B cell (primary cell): ENCODE measurements at regions of chr5 and their contacts with region 1.

Region 1: GRCh38 chr5:179697993-179698934 is 503 bp upstream of the CANX start:
- DNase-seq: peak; percentile 99
- ATAC-seq: peak; percentile 90
- H3K4me3 ChIP-seq: peak overlapping the region; percentile 65 to 95 (median 90)
- H3K4me3 Mint-ChIP-seq: peak overlapping the region; percentile 99
- H3K27ac ChIP-seq: peak overlapping the region; percentile 92 to 98
- H3K27ac Mint-ChIP-seq: peak overlapping the region; percentile 99
- H3K4me1 ChIP-seq: peaks cover 16 to 27% of the 10 kb centered on the region in 2 donors
- H3K4me1 Mint-ChIP-seq: peaks cover 30% of the 10 kb centered on the region
- H3K27me3 ChIP-seq: no peaks in the 10 kb centered on the region
- H3K27me3 Mint-ChIP-seq: no peaks in the 10 kb centered on the region
- CTCF ChIP-seq: no peak

Region 2: DNA sequence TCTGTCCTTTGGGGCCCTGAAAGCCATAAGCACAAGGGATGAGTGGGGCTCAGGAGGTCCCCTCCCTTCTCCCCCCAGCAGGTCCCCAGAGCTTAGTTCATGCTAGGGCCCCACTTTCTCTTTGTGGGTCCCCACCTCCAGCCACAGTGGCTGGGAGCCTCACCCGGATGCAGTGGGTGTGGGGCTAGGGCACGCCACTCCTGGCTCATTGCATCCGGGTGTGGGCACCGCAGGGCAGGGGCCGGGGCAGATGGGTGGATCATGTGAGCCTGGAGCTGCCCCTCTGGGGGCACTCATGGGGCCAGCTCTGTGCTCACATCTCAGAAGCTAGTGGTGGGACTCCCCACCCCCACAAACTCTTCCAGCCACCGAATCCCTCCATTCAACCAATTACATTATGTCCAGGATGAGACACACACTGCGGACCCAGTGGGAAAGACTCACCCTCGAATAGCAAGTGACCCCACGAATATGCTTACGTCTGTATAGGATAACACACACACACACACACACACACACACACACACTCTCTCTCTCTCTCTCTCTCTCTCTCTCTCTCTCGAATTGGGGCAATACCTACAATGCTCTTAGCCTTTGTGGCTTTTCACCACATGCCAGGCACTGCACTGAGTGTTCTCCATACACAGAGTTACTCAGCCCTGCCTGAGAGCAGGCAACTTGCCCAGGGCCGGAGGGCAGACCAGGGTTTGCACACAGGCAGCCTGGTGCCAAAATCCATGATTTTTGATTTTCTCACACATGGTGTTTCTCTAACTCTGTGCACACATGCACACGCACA is 1448.9 kb before region 1 on chr5:
- CTCF ChIA-PET with region 1: no interaction called
- POLR2A ChIA-PET with region 1: no interaction called
- intact Hi-C with region 1: loop called (anchors 10 kb)
- DNase-seq: no peak
- ATAC-seq: peak; percentile 33
- H3K4me3 ChIP-seq: no peak overlapping the region
- H3K4me3 Mint-ChIP-seq: no peak overlapping the region
- H3K27ac ChIP-seq: peak overlapping the region in 1 of 2 donors; percentile 4
- H3K27ac Mint-ChIP-seq: peak overlapping the region; percentile 57
- H3K4me1 ChIP-seq: peaks cover 29 to 33% of the 10 kb centered on the region in 2 donors
- H3K4me1 Mint-ChIP-seq: peaks cover 30% of the 10 kb centered on the region
- H3K27me3 ChIP-seq: no peaks in the 10 kb centered on the region
- H3K27me3 Mint-ChIP-seq: no peaks in the 10 kb centered on the region
- CTCF ChIP-seq: no peak

Region 3: GRCh38 chr5:179763215-179763945 is 65.1 kb after region 1 on chr5:
- CTCF ChIA-PET with region 1: interaction called, 3 read pairs
- POLR2A ChIA-PET with region 1: no interaction called
- intact Hi-C with region 1: loop called (anchors 2 kb)
- DNase-seq: peak; percentile 71
- ATAC-seq: peak; percentile 62
- H3K4me3 ChIP-seq: no peak overlapping the region
- H3K4me3 Mint-ChIP-seq: no peak overlapping the region
- H3K27ac ChIP-seq: no peak overlapping the region
- H3K27ac Mint-ChIP-seq: no peak overlapping the region
- H3K4me1 ChIP-seq: peaks cover 17 to 32% of the 10 kb centered on the region in 2 donors
- H3K4me1 Mint-ChIP-seq: peaks cover 45% of the 10 kb centered on the region
- H3K27me3 ChIP-seq: no peaks in the 10 kb centered on the region
- H3K27me3 Mint-ChIP-seq: no peaks in the 10 kb centered on the region
- CTCF ChIP-seq: peak; percentile 96

Region 4: DNA sequence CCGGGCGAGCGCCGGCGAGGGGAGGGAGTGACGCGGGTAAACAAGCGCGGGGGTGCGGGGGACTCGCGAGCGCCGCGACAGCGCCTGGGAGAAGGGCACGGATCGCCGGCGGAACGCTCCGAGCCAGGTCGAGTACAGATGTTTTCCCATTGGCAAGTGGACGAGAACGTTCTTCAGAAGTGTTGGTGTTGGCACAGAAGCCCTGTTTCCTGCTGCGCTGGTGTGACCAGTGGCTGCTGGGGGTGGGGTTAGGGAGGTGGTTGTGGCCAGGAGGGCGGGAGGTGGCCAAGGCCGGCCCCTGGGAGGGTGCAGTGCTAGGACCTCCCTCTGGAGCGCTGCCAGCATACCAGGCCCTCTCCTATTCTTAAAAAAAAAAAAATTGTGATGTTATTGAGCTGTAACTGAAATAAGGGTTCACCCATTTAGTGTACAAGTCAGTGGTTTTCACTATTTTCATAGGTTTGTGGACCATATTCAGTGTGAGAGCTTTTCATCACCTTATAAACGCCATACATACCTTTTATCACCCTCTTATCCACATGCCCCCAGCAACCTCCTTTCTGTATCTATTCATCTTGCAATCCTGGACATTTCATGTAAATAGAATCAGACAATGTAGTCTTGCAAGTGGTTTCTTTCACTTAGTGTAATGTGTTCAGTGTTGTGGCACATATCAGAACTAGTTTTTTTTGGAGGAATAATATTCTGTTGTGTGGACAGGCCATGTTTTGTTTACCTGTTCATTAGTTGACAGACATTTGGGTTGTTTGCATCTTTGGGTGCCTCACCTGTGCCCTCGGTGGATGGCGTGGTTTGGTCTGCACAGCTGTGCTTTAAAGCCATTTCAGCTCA is 123.5 kb after region 1 on chr5:
- CTCF ChIA-PET with region 1: no interaction called
- POLR2A ChIA-PET with region 1: no interaction called
- intact Hi-C with region 1: loop called (anchors 1 kb)
- DNase-seq: peak; percentile 89
- ATAC-seq: peak; percentile 48
- H3K4me3 ChIP-seq: peak overlapping the region; percentile 22 to 94 (median 81)
- H3K4me3 Mint-ChIP-seq: peak overlapping the region; percentile 98
- H3K27ac ChIP-seq: peak overlapping the region; percentile 91 to 98
- H3K27ac Mint-ChIP-seq: peak overlapping the region; percentile 98
- H3K4me1 ChIP-seq: peaks cover 36 to 47% of the 10 kb centered on the region in 2 donors
- H3K4me1 Mint-ChIP-seq: peaks cover 55% of the 10 kb centered on the region
- H3K27me3 ChIP-seq: peaks cover 0 to 4% (median 0%) of the 10 kb centered on the region in 4 experiments
- H3K27me3 Mint-ChIP-seq: no peaks in the 10 kb centered on the region
- CTCF ChIP-seq: no peak

Region 5: GRCh38 chr5:180071531-180072255 is 373.4 kb after region 1 on chr5 and contains the start of gene RNF130:
- CTCF ChIA-PET with region 1: no interaction called
- POLR2A ChIA-PET with region 1: no interaction called
- intact Hi-C with region 1: loop called (anchors 1 kb)
- DNase-seq: peak; percentile 90
- ATAC-seq: peak; percentile 75
- H3K4me3 ChIP-seq: peak within 1 kb of the TSS; percentile 66 to 85 (median 79)
- H3K4me3 Mint-ChIP-seq: peak within 1 kb of the TSS; percentile 89
- H3K27ac ChIP-seq: peak within 1 kb of the TSS; percentile 64 to 73
- H3K27ac Mint-ChIP-seq: peak within 1 kb of the TSS; percentile 84
- H3K4me1 ChIP-seq: peaks cover 25 to 30% of the 10 kb centered on the region in 2 donors
- H3K4me1 Mint-ChIP-seq: peaks cover 32% of the 10 kb centered on the region
- H3K27me3 ChIP-seq: no peaks in the 10 kb centered on the region
- H3K27me3 Mint-ChIP-seq: peaks cover 7% of the 10 kb centered on the region
- CTCF ChIP-seq: no peak
- total RNA-seq, gene RNF130: 25.8 and 28.4 TPM in 2 replicates

Region 6: DNA sequence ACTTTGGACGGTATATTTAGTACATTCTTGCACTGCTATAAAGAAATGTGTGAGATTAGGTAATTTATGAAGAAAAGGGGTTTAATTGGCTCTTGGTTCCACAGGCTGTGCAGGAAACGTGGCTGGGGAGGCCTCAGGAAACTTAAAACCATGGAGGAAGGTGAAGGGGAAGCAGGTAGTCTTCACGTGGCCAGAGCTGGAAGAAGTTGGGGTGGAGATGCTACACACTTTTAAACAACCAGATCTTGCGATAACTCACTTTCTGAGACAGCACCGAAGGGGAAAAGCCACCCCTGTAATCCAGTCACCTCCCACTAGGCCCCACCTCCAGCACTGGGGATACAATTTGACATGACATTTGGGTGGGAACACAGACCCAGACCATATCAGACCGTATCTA is 809.4 kb after region 1 on chr5:
- CTCF ChIA-PET with region 1: no interaction called
- POLR2A ChIA-PET with region 1: no interaction called
- intact Hi-C with region 1: no loop called
- DNase-seq: no peak
- ATAC-seq: no peak
- H3K4me3 ChIP-seq: no peak overlapping the region
- H3K4me3 Mint-ChIP-seq: no peak overlapping the region
- H3K27ac ChIP-seq: no peak overlapping the region
- H3K27ac Mint-ChIP-seq: no peak overlapping the region
- H3K4me1 ChIP-seq: peaks cover 4 to 6% of the 10 kb centered on the region in 2 donors
- H3K4me1 Mint-ChIP-seq: peaks cover 29% of the 10 kb centered on the region
- H3K27me3 ChIP-seq: no peaks in the 10 kb centered on the region
- H3K27me3 Mint-ChIP-seq: no peaks in the 10 kb centered on the region
- CTCF ChIP-seq: no peak